ENCODE measurements at regions of chr9 and their contacts with region 1.

Region 1: GRCh38 chr9:130172161-130172857 is at the start of gene NCS1:
- DNase-seq: peak; percentile 51
- H3K4me3 ChIP-seq: peak within 1 kb of the TSS; percentile 77 to 83 (median 80)
- H3K27ac ChIP-seq: peak within 1 kb of the TSS; percentile 5
- H3K4me1 ChIP-seq: peaks cover 10% of the 10 kb centered on the region
- H3K27me3 ChIP-seq: no peaks in the 10 kb centered on the region
- CTCF ChIP-seq: no peak
- total RNA-seq, gene NCS1: 76.5 to 85.4 TPM

Region 2: DNA sequence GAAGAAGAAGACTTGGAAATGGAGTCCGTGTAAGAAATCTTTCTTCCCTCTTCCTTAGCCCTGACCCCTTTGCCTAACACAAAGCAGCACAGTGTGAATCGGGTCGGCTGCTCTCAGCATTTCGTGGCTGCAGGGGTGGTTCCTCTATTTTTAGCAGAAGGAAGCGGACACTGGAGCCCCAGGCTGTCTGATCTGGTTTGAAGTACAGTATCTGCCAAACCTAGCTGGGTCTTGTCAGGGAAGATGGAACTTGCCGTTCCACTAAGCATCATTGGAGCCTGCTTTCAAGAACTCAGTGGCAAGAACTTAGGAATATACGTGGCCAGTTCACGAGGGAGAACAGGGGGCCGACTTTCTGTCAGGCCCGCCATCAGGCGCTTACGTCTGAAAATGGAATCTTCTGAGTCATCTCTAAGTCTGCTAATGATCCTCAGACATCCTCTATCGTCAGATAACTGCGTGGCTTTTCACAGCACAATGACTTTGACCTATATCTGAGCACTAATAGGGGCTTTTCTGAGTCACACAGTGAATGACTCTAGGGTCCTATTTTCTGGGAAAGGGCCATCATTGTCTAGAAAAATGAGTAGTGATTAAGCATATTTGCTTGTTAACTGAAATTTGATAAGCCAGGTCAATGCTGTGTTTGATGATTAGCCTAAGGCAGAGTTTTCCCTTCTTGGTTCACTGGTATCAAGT is 43.4 kb before region 1 on chr9:
- CTCF ChIA-PET with region 1: no interaction called
- dilution Hi-C with region 1: loop called (anchors 5 kb)
- in situ Hi-C with region 1: no loop called
- intact Hi-C with region 1: no loop called
- DNase-seq: no peak
- H3K4me3 ChIP-seq: no peak overlapping the region
- H3K27ac ChIP-seq: no peak overlapping the region
- H3K4me1 ChIP-seq: peaks cover 14% of the 10 kb centered on the region
- H3K27me3 ChIP-seq: no peaks in the 10 kb centered on the region
- CTCF ChIP-seq: no peak

Region 3: DNA sequence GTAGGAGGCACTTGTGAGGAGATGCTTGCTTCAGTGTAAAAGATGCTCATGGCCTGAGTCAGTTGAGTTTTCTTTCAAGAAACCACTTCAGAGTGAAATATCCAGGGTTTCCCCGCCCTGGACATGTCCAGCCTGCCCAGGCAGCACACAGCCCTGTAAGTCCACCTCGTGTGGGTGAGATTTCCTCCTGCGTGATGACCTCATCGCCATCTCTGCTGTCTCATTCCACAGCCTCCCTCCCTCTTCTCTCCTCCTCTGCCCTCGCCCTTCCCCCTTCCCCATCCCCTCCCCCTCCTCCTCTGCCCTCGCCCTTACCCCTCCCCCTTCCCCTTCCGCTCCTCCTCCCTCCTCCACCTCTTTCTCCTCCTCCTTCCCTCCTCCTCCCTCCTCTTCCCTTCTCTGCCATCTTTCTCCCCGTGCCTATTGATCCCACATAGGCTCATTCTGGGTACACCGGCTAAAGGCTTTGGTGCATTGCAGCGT is 34.1 kb before region 1 on chr9:
- CTCF ChIA-PET with region 1: no interaction called
- dilution Hi-C with region 1: no loop called
- in situ Hi-C with region 1: no loop called
- intact Hi-C with region 1: loop called (anchors 5 kb)
- DNase-seq: peak; percentile 97
- H3K4me3 ChIP-seq: no peak overlapping the region
- H3K27ac ChIP-seq: peak overlapping the region; percentile 51
- H3K4me1 ChIP-seq: peaks cover 32% of the 10 kb centered on the region
- H3K27me3 ChIP-seq: no peaks in the 10 kb centered on the region
- CTCF ChIP-seq: no peak

Region 4: DNA sequence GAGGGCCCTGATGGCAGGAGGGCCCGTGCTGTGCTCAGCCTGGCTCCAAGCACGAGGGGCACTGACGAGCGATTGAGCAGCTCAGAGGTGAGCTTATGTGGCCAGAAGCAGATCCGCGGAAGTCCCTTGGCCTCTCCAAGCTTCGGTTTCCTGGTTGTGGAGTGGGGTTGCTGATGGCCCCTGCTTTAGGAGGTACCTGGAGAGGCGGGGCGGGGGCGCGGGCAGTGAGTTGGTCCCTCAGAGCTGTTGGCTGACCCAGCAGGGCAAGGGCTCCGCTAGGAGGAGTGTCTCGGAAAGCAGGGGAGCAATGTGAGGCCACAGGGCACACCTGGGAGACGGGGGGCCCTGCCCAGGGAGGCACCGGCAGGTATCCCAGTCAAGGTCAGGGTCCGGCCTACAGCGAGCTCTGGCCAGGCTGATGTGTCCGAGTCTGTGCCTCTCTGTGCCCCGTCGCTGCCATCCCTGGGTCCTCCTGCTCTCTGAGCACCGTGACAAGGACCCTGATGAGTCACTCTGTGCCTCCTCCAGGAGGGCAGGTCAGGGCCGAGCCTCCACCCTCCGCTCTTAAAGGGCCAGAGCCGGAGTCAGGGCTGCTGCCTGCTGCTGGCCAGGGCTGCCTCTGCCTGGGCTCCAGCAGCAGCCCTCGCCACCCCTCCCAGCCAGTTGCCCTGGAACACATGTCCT is 14.7 kb after region 1 on chr9:
- CTCF ChIA-PET with region 1: interaction called, 10 read pairs
- dilution Hi-C with region 1: no loop called
- in situ Hi-C with region 1: no loop called
- intact Hi-C with region 1: no loop called
- DNase-seq: peak; percentile 69
- H3K4me3 ChIP-seq: peak overlapping the region; percentile 2 to 50 (median 36)
- H3K27ac ChIP-seq: no peak overlapping the region
- H3K4me1 ChIP-seq: peaks cover 31% of the 10 kb centered on the region
- H3K27me3 ChIP-seq: no peaks in the 10 kb centered on the region
- CTCF ChIP-seq: peak in 1 of 2 donors; percentile 1

Region 5: DNA sequence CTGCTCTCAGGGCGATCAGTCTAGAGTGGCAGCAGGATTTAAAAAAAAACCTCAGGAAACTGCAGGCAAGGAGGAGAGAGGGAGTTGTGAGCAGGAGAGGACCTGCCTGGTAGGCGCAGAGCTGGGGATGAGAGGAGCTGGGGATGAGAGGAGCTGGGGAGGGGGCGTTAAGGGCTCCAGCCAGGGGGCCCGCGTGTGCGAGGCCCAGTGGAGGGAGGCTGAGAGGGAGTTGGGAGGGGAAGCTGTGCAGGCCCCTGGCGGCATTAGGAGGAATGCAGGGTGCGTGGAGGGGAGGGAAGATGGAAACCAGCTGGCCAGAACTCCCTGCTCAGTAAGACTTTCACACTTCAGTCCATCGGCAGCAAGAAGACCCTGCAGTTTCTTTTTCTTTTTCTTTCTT is 48.0 kb after region 1 on chr9:
- CTCF ChIA-PET with region 1: no interaction called
- dilution Hi-C with region 1: loop called (anchors 10 kb)
- in situ Hi-C with region 1: no loop called
- intact Hi-C with region 1: loop called (anchors 1 kb)
- DNase-seq: no peak
- H3K4me3 ChIP-seq: no peak overlapping the region
- H3K27ac ChIP-seq: no peak overlapping the region
- H3K4me1 ChIP-seq: peaks cover 8% of the 10 kb centered on the region
- H3K27me3 ChIP-seq: no peaks in the 10 kb centered on the region
- CTCF ChIP-seq: no peak

Region 6: DNA sequence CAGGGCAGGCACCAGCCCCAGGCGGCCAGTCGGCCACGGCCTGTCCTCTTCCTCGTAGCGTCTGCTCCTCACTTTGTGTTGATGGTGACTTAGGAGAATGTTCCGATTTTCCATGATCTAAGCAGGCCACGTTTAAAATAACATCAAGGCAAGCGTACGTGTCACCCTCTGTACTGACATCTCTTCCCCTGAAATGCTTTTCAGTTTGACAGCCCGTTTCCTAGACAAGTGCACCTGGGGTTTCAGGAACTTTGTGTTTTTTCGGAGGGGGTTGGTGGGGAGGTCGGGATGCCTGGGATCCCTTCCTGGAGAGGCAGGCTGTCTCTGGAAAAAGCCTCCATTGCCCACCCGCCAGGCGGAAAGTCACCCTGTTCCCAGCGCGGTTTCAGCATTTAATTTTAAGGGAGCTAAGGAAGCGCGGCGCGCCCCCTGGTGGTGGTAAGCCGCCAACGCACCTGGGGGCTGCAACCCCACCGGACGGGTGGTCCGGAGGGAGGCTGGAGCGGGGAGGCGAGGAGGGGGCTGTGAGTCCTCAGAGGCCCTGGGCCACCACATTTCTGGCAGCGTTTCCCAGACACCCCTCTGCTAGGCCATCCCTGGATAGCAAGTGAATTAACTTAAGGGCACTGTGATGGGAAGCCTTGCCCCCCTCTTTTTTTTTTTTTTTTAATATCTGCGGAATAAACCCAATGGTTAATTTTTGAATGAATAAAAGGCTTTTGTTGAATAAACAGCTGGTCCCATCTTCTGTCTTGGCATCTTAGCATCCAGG is 63.8 kb after region 1 on chr9:
- CTCF ChIA-PET with region 1: no interaction called
- dilution Hi-C with region 1: no loop called
- in situ Hi-C with region 1: no loop called
- intact Hi-C with region 1: loop called (anchors 5 kb)
- DNase-seq: peak; percentile 17
- H3K4me3 ChIP-seq: no peak overlapping the region
- H3K27ac ChIP-seq: no peak overlapping the region
- H3K4me1 ChIP-seq: no peaks in the 10 kb centered on the region
- H3K27me3 ChIP-seq: no peaks in the 10 kb centered on the region
- CTCF ChIP-seq: peak; percentile 65 to 96